Testis (tissue), 5 donors: ENCODE measurements at regions of chr20 and their contacts with region 1.

Region 1: DNA sequence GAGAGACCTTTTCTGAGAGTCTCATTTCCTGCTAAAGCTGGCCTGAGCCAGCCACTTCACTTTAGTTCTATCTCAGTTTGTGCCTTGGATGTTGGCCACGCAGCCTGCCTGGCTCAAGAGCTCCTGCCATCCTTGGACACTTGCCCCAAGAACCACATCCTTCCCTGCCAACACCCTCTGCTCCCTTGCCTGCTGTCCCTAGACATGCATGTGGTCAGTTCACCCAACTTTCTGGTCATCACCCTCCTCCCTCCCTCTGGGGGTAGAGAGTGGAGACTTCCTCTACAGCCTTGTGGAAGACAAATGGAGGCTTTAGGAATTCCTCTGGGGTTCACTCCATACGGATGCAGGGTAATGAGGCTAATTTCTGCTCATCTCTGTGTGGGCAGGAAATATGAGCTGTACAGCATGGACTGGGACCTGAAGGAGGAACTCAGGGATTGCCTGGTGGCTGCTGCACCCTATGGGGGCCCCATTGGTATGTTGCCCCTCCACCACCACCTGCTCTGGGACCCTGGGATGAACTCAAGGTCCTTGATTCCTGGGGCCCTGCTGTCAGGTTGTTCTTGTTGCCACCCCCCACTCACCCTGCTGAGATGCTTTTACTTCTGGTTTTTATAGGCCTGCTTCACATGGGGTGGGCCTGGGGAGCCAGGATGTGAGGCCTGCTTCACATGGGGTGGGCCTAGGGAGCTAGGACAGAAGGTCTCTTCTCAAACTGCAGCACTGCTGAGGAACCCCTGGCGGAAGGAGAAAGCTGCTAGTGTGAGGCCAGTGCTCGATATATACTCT is 13.8 kb upstream of the PTPRA start:
- DNase-seq: no peak
- H3K4me3 ChIP-seq: no peak overlapping the region
- H3K27ac ChIP-seq: no peak overlapping the region
- H3K4me1 ChIP-seq: no peaks in the 10 kb centered on the region
- H3K27me3 ChIP-seq: no peaks in the 10 kb centered on the region
- CTCF ChIP-seq: no peak
- POLR2A ChIP-seq: no peak

Region 2: DNA sequence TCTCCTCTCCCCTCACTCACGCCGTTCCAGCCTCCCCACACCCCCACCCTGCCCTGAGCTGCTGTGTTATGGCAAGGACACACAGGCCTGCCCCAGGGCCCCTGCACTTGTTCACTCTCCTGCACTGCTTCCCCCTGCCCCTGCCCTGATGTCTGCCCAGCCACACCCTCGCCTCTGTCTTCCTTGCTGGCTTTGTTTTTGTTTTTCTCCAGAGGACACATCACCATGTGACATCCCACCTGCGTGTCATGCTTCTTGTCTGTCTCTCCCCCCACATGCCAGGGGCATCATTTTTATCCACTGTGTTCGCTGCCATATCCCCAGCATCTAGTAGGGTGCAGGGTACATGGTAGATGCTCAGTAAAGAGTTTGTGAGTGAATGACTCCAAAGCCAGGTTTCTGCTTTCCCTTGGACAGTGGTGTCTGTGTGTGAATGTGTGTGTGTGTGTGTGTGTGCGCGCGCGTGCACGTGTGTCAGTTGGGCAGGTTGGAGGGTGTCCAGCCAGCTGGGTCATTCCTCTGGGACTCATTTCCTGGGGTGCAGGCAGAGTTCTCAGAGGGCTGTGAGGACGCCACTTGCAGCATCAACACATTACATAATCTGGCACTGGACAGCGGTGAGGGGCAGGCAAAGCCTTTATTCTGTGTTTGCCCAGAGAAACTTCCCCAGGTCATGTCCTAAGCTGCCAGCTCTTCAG is 697.3 kb before region 1 on chr20:
- intact Hi-C with region 1: loop called (anchors 10 kb)
- DNase-seq: no peak
- H3K4me3 ChIP-seq: no peak overlapping the region
- H3K27ac ChIP-seq: no peak overlapping the region
- H3K4me1 ChIP-seq: no peaks in the 10 kb centered on the region
- H3K27me3 ChIP-seq: no peaks in the 10 kb centered on the region
- CTCF ChIP-seq: no peak
- POLR2A ChIP-seq: no peak